ENCODE measurements at regions of chr10 and their contacts with region 1.

Region 1: DNA sequence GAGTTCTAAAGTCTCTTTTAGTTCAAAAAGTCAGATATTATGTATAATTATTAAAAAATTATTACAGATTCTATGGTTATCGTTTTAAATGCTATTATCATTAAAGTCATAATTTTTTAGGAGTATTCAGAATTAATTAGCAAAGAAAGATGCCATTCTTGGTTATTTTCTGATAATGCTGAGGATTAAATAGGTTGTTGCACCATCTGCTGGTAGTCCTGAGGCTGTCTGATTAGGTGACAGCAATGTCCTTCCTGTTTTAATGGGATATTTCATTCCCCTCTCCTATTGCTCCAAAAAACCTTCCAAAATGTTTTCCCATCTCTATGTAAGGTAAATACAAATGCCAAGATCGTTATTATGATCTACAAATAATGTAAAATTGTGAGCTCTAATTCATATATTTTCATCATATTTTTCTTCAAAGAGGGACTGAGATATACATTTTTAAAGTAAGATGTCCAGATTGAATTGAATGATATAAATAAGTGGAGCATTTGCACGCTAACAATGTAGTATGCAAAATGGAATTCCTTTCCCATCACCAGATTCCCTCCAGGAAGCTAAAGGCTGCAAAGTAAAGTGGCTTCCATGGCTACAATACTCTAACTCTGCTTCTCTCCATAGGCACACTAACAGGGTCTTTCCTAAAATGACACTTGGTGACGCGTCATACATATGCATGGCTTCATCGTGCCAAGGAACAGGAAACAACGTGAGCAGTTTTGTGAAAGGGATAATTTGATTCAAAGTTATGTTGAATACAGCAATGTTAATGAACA is 58.8 kb upstream of the AKR1E2 start:
- DNase-seq: peak; percentile 46
- H3K4me3 ChIP-seq: no peak overlapping the region
- H3K27ac ChIP-seq: peak overlapping the region; percentile 96
- H3K4me1 ChIP-seq: peaks cover 63% of the 10 kb centered on the region
- H3K27me3 ChIP-seq: no peaks in the 10 kb centered on the region
- CTCF ChIP-seq: peak; percentile 71 to 76

Region 2: DNA sequence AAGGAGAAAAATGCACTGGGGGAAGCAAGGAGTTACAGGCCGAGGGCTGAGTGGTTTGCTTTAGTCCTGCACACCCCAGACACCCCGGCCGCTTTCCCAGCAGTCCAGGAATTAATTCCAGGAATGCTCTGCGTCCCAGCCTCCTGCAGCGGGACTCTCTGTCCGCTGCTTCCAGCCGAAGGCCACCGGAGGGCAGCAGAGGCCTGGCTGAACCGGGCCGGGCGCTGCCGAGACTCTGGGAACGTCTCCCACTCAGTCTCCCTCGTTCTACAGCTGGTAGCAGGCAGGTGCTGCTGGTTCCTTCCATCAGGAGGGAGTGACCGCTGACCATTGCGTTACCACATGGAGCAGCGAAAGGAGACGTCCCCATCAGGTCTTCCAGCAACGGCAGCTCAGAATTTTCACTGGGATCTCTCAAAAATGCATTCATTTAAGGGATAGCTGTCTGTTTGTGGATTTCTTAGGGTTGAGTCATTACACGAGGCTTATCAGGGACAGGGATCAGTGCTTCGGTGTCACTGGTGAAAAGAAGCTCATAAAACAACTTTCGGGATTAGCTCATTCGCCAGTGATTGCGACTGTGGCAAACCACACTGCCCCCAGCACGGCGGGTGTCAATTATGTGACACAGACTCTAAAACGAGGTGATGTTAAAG is 1569.7 kb before region 1 on chr10:
- CTCF ChIA-PET with region 1: no interaction called
- dilution Hi-C with region 1: loop called (anchors 25 kb)
- in situ Hi-C with region 1: no loop called
- intact Hi-C with region 1: loop called (anchors 1 kb)
- DNase-seq: peak; percentile 77
- H3K4me3 ChIP-seq: peak overlapping the region; percentile 28 to 45 (median 30)
- H3K27ac ChIP-seq: no peak overlapping the region
- H3K4me1 ChIP-seq: peaks cover 16% of the 10 kb centered on the region
- H3K27me3 ChIP-seq: peaks cover 12% of the 10 kb centered on the region
- CTCF ChIP-seq: peak; percentile 71 to 98

Region 3: DNA sequence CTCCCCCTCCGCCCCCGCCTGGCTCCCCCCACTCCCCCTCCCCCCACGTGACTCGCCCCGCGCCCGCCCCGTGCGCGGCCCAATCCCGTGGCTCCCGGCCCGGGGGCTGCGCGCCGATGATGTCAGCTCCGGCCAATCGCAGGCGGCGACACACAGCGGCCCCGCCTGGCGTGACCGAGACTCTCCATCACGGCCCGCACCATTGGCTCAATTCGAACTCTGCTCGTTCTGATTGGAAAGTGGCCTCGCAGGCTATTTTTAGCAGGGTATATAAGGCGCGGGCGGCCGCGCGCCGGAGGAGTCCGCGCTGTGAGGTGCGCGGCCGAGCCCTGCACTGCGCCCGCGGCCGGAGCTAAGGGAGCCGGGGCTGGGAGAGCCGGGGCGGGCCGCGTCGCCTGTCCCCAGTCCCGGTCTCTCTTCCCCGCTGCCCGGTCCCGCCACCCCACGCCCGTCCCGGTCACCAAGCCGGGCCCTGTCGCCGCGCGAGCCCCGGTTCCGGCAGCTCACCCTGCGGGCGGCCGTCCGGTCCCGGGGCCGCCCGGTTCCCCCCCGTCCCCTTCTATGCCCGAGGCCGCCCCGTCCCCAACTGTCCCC is 981.9 kb before region 1 on chr10:
- CTCF ChIA-PET with region 1: no interaction called
- dilution Hi-C with region 1: no loop called
- in situ Hi-C with region 1: loop called in 1 of 2 experiments (anchors 10 kb)
- intact Hi-C with region 1: loop called (anchors 1 kb)
- DNase-seq: peak; percentile 97
- H3K4me3 ChIP-seq: peak overlapping the region; percentile 51 to 93 (median 78)
- H3K27ac ChIP-seq: peak overlapping the region; percentile 97
- H3K4me1 ChIP-seq: peaks cover 24% of the 10 kb centered on the region
- H3K27me3 ChIP-seq: no peaks in the 10 kb centered on the region
- CTCF ChIP-seq: no peak

Region 4: DNA sequence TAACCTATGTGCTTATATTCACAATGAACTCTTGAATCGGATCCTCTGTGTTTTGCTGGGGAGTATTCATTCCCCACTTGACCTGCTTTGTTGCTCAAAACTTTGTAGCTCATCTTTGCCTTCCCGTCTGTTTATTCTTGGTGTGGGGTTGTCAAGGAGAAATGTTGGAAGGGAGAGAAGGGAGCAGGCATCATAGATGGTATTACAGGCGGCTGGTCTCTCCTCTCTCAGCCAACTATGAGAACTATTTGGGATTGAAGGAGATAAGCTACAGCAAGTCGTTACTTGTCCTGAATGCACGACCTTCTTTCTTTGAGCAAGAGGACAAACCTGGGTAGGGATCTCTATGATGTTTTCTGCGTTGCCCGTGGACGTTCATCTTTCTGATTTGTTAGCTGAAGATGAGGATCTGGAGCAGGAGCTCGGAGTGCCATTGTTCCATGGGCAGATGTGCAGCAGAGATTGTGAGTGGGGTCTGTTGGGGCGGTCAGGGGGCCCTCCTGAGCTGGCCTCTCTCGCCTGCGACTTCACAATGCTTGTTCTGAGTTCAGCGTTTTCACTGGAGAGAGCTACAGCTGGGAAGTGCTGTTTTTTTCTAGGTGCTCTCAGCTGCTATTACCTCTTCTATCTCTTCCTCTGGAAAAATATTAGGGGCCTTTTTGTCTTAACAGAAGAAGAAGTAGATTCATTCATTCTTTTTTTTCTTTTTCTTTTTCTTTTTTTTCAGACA is 855.3 kb before region 1 on chr10:
- CTCF ChIA-PET with region 1: no interaction called
- dilution Hi-C with region 1: no loop called
- in situ Hi-C with region 1: no loop called
- intact Hi-C with region 1: loop called (anchors 10 kb)
- DNase-seq: peak; percentile 85
- H3K4me3 ChIP-seq: peak overlapping the region; percentile 25 to 38 (median 32)
- H3K27ac ChIP-seq: peak overlapping the region; percentile 93
- H3K4me1 ChIP-seq: peaks cover 14% of the 10 kb centered on the region
- H3K27me3 ChIP-seq: no peaks in the 10 kb centered on the region
- CTCF ChIP-seq: no peak

Region 5: GRCh38 chr10:4512671-4513240 is 254.5 kb before region 1 on chr10:
- CTCF ChIA-PET with region 1: no interaction called
- dilution Hi-C with region 1: no loop called
- in situ Hi-C with region 1: loop called (anchors 10 to 25 kb)
- intact Hi-C with region 1: loop called (anchors 1 kb)
- DNase-seq: peak; percentile 70
- H3K4me3 ChIP-seq: no peak overlapping the region
- H3K27ac ChIP-seq: no peak overlapping the region
- H3K4me1 ChIP-seq: peaks cover 5% of the 10 kb centered on the region
- H3K27me3 ChIP-seq: no peaks in the 10 kb centered on the region
- CTCF ChIP-seq: peak; percentile 79 to 85

Region 6: GRCh38 chr10:4663162-4663904 is 103.9 kb before region 1 on chr10:
- CTCF ChIA-PET with region 1: no interaction called
- dilution Hi-C with region 1: no loop called
- in situ Hi-C with region 1: loop called (anchors 5 to 25 kb)
- intact Hi-C with region 1: loop called (anchors 2 kb)
- DNase-seq: peak; percentile 99
- H3K4me3 ChIP-seq: no peak overlapping the region
- H3K27ac ChIP-seq: peak overlapping the region; percentile 100
- H3K4me1 ChIP-seq: peaks cover 28% of the 10 kb centered on the region
- H3K27me3 ChIP-seq: no peaks in the 10 kb centered on the region
- CTCF ChIP-seq: no peak

Region 7: DNA sequence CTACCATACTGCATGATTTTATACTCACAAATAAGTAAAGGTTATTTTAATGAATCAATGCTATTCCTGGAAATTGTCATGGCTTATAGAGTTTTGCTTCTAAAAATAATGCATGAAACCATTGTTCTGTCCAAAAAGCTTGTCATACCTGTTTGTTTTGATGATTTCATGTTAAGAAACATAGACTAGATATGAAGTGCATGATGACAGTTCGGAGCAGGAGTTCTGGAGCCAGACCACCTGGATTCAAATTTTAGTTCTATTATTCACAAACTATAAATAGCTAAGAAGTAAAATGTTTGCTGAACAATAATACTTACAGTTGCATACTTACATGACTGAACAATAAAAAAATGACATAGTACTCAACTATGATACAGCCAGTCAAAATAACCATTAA is 48.2 kb before region 1 on chr10:
- CTCF ChIA-PET with region 1: no interaction called
- dilution Hi-C with region 1: loop called (anchors 5 kb)
- in situ Hi-C with region 1: no loop called
- intact Hi-C with region 1: no loop called
- DNase-seq: no peak
- H3K4me3 ChIP-seq: no peak overlapping the region
- H3K27ac ChIP-seq: no peak overlapping the region
- H3K4me1 ChIP-seq: no peaks in the 10 kb centered on the region
- H3K27me3 ChIP-seq: no peaks in the 10 kb centered on the region
- CTCF ChIP-seq: no peak

Measured in mammary epithelial cell (primary cell).